CD8-positive, alpha-beta memory T cell (primary cell): ENCODE measurements at regions of chr5 and their contacts with region 1.

Region 1: GRCh38 chr5:35926389-35927051 is 11.9 kb downstream of the CAPSL start:
- DNase-seq: peak; percentile 26 to 74 (median 66)
- H3K4me3 ChIP-seq: no peak overlapping the region
- H3K4me3 Mint-ChIP-seq: peak overlapping the region in 6 of 7 donors; percentile 52 to 76 (median 66)
- H3K27ac ChIP-seq: no peak overlapping the region
- H3K27ac Mint-ChIP-seq: peak overlapping the region in 2 of 8 donors; percentile 27 to 95
- H3K4me1 ChIP-seq: peaks cover 22% of the 10 kb centered on the region
- H3K4me1 Mint-ChIP-seq: peaks cover 24 to 44% (median 39%) of the 10 kb centered on the region in 3 donors
- H3K27me3 ChIP-seq: no peaks in the 10 kb centered on the region
- H3K27me3 Mint-ChIP-seq: peaks cover 1 to 16% of the 10 kb centered on the region in 2 donors

Region 2: GRCh38 chr5:35626108-35626507 is 300.4 kb before region 1 on chr5:
- CTCF ChIA-PET with region 1: interaction called, 18 read pairs
- POLR2A ChIA-PET with region 1: no interaction called
- DNase-seq: no peak
- H3K4me3 ChIP-seq: no peak overlapping the region
- H3K4me3 Mint-ChIP-seq: no peak overlapping the region
- H3K27ac ChIP-seq: no peak overlapping the region
- H3K27ac Mint-ChIP-seq: no peak overlapping the region
- H3K4me1 ChIP-seq: no peaks in the 10 kb centered on the region
- H3K4me1 Mint-ChIP-seq: peaks cover 14 to 23% (median 21%) of the 10 kb centered on the region in 3 donors
- H3K27me3 ChIP-seq: no peaks in the 10 kb centered on the region
- H3K27me3 Mint-ChIP-seq: no peaks in the 10 kb centered on the region

Region 3: DNA sequence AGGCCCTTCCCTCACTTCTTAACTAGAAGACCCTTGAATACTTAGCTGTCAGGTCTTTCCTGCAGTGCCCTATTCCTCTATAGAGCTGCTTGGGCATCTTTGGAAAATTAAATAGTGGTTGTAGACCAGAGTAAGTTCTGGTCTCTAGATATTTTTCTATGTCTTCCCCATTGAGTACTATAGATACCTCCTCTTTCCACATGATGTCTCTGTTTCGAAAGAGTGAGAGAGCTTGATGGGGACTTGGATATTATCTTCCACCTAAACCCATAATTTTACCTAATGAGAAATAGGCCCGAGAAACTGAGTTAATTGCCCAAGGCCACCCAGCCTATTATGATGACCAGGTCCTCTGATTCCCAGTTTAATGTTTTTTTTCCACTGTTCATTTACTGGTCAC is 268.6 kb before region 1 on chr5:
- CTCF ChIA-PET with region 1: interaction called, 203 read pairs
- POLR2A ChIA-PET with region 1: no interaction called
- DNase-seq: peak in 1 of 5 donors; percentile 28
- H3K4me3 ChIP-seq: no peak overlapping the region
- H3K4me3 Mint-ChIP-seq: peak overlapping the region in 1 of 7 donors; percentile 31
- H3K27ac ChIP-seq: no peak overlapping the region
- H3K27ac Mint-ChIP-seq: peak overlapping the region in 4 of 8 donors; percentile 3 to 58 (median 30)
- H3K4me1 ChIP-seq: peaks cover 5% of the 10 kb centered on the region
- H3K4me1 Mint-ChIP-seq: peaks cover 2 to 33% (median 9%) of the 10 kb centered on the region in 3 donors
- H3K27me3 ChIP-seq: no peaks in the 10 kb centered on the region
- H3K27me3 Mint-ChIP-seq: no peaks in the 10 kb centered on the region

Region 4: GRCh38 chr5:35863159-35863558 is 63.4 kb before region 1 on chr5:
- CTCF ChIA-PET with region 1: interaction called, 26 read pairs
- POLR2A ChIA-PET with region 1: interaction called, 6 read pairs
- DNase-seq: no peak
- H3K4me3 ChIP-seq: peak overlapping the region; percentile 93
- H3K4me3 Mint-ChIP-seq: peak overlapping the region; percentile 93 to 99 (median 97)
- H3K27ac ChIP-seq: no peak overlapping the region
- H3K27ac Mint-ChIP-seq: peak overlapping the region; percentile 40 to 99 (median 96)
- H3K4me1 ChIP-seq: peaks cover 49% of the 10 kb centered on the region
- H3K4me1 Mint-ChIP-seq: peaks cover 66 to 84% (median 73%) of the 10 kb centered on the region in 3 donors
- H3K27me3 ChIP-seq: no peaks in the 10 kb centered on the region
- H3K27me3 Mint-ChIP-seq: no peaks in the 10 kb centered on the region

Region 5: GRCh38 chr5:35908228-35908627 is 18.3 kb before region 1 on chr5:
- CTCF ChIA-PET with region 1: interaction called, 13 read pairs
- POLR2A ChIA-PET with region 1: no interaction called
- DNase-seq: no peak
- H3K4me3 ChIP-seq: no peak overlapping the region
- H3K4me3 Mint-ChIP-seq: no peak overlapping the region
- H3K27ac ChIP-seq: no peak overlapping the region
- H3K27ac Mint-ChIP-seq: peak overlapping the region in 2 of 8 donors; percentile 17 to 52
- H3K4me1 ChIP-seq: peaks cover 25% of the 10 kb centered on the region
- H3K4me1 Mint-ChIP-seq: peaks cover 23 to 47% (median 36%) of the 10 kb centered on the region in 3 donors
- H3K27me3 ChIP-seq: no peaks in the 10 kb centered on the region
- H3K27me3 Mint-ChIP-seq: peaks cover 0 to 2% of the 10 kb centered on the region in 2 donors

Region 6: GRCh38 chr5:35963381-35963843 is 36.9 kb after region 1 on chr5:
- CTCF ChIA-PET with region 1: no interaction called
- POLR2A ChIA-PET with region 1: no interaction called
- DNase-seq: no peak
- H3K4me3 ChIP-seq: no peak overlapping the region
- H3K4me3 Mint-ChIP-seq: no peak overlapping the region
- H3K27ac ChIP-seq: no peak overlapping the region
- H3K27ac Mint-ChIP-seq: no peak overlapping the region
- H3K4me1 ChIP-seq: no peaks in the 10 kb centered on the region
- H3K4me1 Mint-ChIP-seq: no peaks in the 10 kb centered on the region
- H3K27me3 ChIP-seq: no peaks in the 10 kb centered on the region
- H3K27me3 Mint-ChIP-seq: peaks cover 24 to 67% of the 10 kb centered on the region in 2 donors

Region 7: GRCh38 chr5:35990941-35991611 is 64.6 kb after region 1 on chr5 and contains the start of gene UGT3A1:
- CTCF ChIA-PET with region 1: no interaction called
- POLR2A ChIA-PET with region 1: no interaction called
- DNase-seq: no peak
- H3K4me3 ChIP-seq: no peak within 1 kb of the TSS
- H3K4me3 Mint-ChIP-seq: no peak within 1 kb of the TSS
- H3K27ac ChIP-seq: no peak within 1 kb of the TSS
- H3K27ac Mint-ChIP-seq: no peak within 1 kb of the TSS
- H3K4me1 ChIP-seq: no peaks in the 10 kb centered on the region
- H3K4me1 Mint-ChIP-seq: no peaks in the 10 kb centered on the region
- H3K27me3 ChIP-seq: no peaks in the 10 kb centered on the region
- H3K27me3 Mint-ChIP-seq: peaks cover 11 to 56% of the 10 kb centered on the region in 2 donors
- total RNA-seq, gene UGT3A1: not detected